ENCODE measurements at regions of chr1 and their contacts with region 1.

Region 1: GRCh38 chr1:221435504-221435904 is 306.4 kb downstream of the DUSP10 start:
- H3K4me3 Mint-ChIP-seq: no peak overlapping the region
- H3K27ac Mint-ChIP-seq: no peak overlapping the region
- H3K4me1 Mint-ChIP-seq: peaks cover 9% of the 10 kb centered on the region
- H3K27me3 Mint-ChIP-seq: no peaks in the 10 kb centered on the region

Region 2: GRCh38 chr1:220810179-220810653 is 625.3 kb before region 1 on chr1:
- intact Hi-C with region 1: loop called (anchors 1 kb)
- H3K4me3 Mint-ChIP-seq: peak overlapping the region; percentile 63
- H3K27ac Mint-ChIP-seq: no peak overlapping the region
- H3K4me1 Mint-ChIP-seq: peaks cover 17% of the 10 kb centered on the region
- H3K27me3 Mint-ChIP-seq: no peaks in the 10 kb centered on the region

Region 3: GRCh38 chr1:220873868-220874655 is 561.4 kb before region 1 on chr1:
- intact Hi-C with region 1: loop called (anchors 2 kb)
- H3K4me3 Mint-ChIP-seq: no peak overlapping the region
- H3K27ac Mint-ChIP-seq: peak overlapping the region; percentile 56
- H3K4me1 Mint-ChIP-seq: peaks cover 45% of the 10 kb centered on the region
- H3K27me3 Mint-ChIP-seq: peaks cover 5% of the 10 kb centered on the region

Region 4: GRCh38 chr1:221419513-221420088 is 15.9 kb before region 1 on chr1:
- intact Hi-C with region 1: no loop called
- H3K4me3 Mint-ChIP-seq: no peak overlapping the region
- H3K27ac Mint-ChIP-seq: no peak overlapping the region
- H3K4me1 Mint-ChIP-seq: no peaks in the 10 kb centered on the region
- H3K27me3 Mint-ChIP-seq: peaks cover 1% of the 10 kb centered on the region

Measured in dendritic cell treated with granulocyte-macrophage colony-stimulating factor and Interleukin-4, amounts not matched to agents 40 ng/mL and 50 ng/mL, for 4 days (primary cell).